ENCODE measurements at regions of chr3 and their contacts with region 1.

Region 1: GRCh38 chr3:71117572-71118247 is 465.8 kb downstream of the FOXP1 start:
- DNase-seq: peak; percentile 47
- ATAC-seq: peak; percentile 66
- H3K4me3 ChIP-seq: no peak overlapping the region
- H3K4me3 Mint-ChIP-seq: peak overlapping the region; percentile 80
- H3K27ac ChIP-seq: peak overlapping the region in 1 of 2 donors; percentile 73
- H3K27ac Mint-ChIP-seq: peak overlapping the region; percentile 93
- H3K4me1 ChIP-seq: peaks cover 28 to 31% of the 10 kb centered on the region in 2 donors
- H3K4me1 Mint-ChIP-seq: peaks cover 81% of the 10 kb centered on the region
- H3K27me3 ChIP-seq: no peaks in the 10 kb centered on the region
- H3K27me3 Mint-ChIP-seq: no peaks in the 10 kb centered on the region
- CTCF ChIP-seq: no peak

Region 2: GRCh38 chr3:70580021-70580420 is 537.7 kb before region 1 on chr3:
- CTCF ChIA-PET with region 1: no interaction called
- POLR2A ChIA-PET with region 1: no interaction called
- intact Hi-C with region 1: no loop called
- DNase-seq: no peak
- ATAC-seq: no peak
- H3K4me3 ChIP-seq: no peak overlapping the region
- H3K4me3 Mint-ChIP-seq: no peak overlapping the region
- H3K27ac ChIP-seq: no peak overlapping the region
- H3K27ac Mint-ChIP-seq: no peak overlapping the region
- H3K4me1 ChIP-seq: no peaks in the 10 kb centered on the region
- H3K4me1 Mint-ChIP-seq: no peaks in the 10 kb centered on the region
- H3K27me3 ChIP-seq: no peaks in the 10 kb centered on the region
- H3K27me3 Mint-ChIP-seq: peaks cover 27% of the 10 kb centered on the region
- CTCF ChIP-seq: no peak

Region 3: DNA sequence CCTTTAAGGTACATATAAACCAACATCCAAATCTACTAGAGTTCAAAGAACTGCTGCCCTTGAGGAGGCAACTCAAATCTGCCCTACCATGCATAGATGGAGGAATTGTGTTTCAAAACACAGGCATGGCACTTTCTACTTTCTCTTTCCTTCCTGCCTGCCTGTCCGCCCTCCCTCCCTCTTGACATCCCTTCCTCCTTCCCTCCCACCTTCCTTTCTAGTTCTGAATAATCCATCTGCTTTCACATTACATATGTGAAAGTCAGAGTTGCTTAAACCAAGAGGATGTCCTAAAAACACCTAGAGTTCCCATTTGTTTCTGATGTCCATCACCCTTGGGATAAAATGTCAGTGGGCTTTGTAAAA is 71.8 kb before region 1 on chr3:
- CTCF ChIA-PET with region 1: no interaction called
- POLR2A ChIA-PET with region 1: no interaction called
- intact Hi-C with region 1: no loop called
- DNase-seq: no peak
- ATAC-seq: peak; percentile 54
- H3K4me3 ChIP-seq: peak overlapping the region in 2 of 5 experiments; percentile 15 to 25
- H3K4me3 Mint-ChIP-seq: peak overlapping the region; percentile 66
- H3K27ac ChIP-seq: peak overlapping the region; percentile 84 to 89
- H3K27ac Mint-ChIP-seq: peak overlapping the region; percentile 84
- H3K4me1 ChIP-seq: peaks cover 64 to 69% of the 10 kb centered on the region in 2 donors
- H3K4me1 Mint-ChIP-seq: peaks cover 82% of the 10 kb centered on the region
- H3K27me3 ChIP-seq: no peaks in the 10 kb centered on the region
- H3K27me3 Mint-ChIP-seq: no peaks in the 10 kb centered on the region
- CTCF ChIP-seq: no peak

Region 4: DNA sequence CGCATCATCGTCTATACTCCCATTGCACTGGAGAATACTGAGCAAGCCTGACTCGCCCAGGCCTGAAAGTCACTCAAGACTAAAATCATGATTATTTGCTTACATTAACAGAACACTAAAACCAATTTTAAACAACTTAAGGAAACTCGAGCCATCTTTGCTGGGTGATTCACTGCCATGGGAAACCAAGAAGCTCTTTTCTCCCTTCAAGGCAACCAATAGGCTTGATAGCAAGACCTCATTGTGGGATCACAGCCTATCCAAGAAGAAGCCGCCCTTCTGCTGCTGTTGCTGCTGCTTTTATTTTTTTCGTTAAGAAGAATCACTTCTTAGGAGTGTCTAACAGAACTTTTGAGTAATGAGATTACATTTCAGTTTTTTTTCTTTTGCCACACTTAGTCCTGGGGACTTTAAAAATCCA is 13.6 kb before region 1 on chr3:
- CTCF ChIA-PET with region 1: interaction called, 4 read pairs
- POLR2A ChIA-PET with region 1: no interaction called
- intact Hi-C with region 1: loop called (anchors 2 kb)
- DNase-seq: no peak
- ATAC-seq: no peak
- H3K4me3 ChIP-seq: no peak overlapping the region
- H3K4me3 Mint-ChIP-seq: no peak overlapping the region
- H3K27ac ChIP-seq: peak overlapping the region in 1 of 2 donors; percentile 51
- H3K27ac Mint-ChIP-seq: peak overlapping the region; percentile 3
- H3K4me1 ChIP-seq: peaks cover 24 to 28% of the 10 kb centered on the region in 2 donors
- H3K4me1 Mint-ChIP-seq: peaks cover 86% of the 10 kb centered on the region
- H3K27me3 ChIP-seq: no peaks in the 10 kb centered on the region
- H3K27me3 Mint-ChIP-seq: no peaks in the 10 kb centered on the region
- CTCF ChIP-seq: no peak